ENCODE measurements at regions of chr22 and their contacts with region 1.

Region 1: DNA sequence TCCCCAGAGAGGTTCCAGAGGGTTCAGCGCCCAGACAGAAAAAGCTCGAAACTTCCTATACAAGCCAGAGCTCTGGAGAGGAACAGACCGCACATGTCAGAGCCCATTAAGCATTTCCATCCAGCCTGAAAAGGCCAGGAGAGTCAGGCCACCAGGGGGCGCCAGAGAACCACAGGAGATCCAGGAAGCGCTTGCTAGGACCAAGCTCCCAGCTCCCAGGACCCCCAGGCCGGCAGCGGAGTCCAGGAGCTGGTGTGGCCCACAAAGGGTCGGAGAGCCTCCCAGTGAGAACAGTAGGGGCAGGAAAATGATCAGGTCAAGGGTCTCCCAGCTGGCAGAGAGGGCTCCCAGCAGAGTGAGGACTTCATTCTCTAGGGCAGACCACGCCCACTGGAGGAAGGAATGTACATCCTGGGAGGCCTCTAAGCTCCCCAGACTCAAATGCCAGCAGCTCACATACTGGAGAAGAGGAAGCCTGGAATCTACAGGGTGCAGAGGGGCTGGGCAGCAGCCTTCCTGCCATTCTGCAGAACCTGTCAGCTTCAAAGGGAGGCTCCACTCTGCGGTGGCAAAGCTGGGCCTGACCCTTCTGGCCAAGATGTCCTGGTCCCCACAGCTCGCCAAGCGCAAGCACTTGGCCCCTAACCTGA is 2.1 kb upstream of the MEI1 start:
- DNase-seq: peak; percentile 78 to 98 (median 88)
- ATAC-seq: peak; percentile 81
- H3K4me3 ChIP-seq: no peak overlapping the region
- H3K4me3 Mint-ChIP-seq: peak overlapping the region; percentile 64
- H3K27ac ChIP-seq: no peak overlapping the region
- H3K27ac Mint-ChIP-seq: no peak overlapping the region
- H3K4me1 ChIP-seq: peaks cover 16% of the 10 kb centered on the region
- H3K4me1 Mint-ChIP-seq: peaks cover 10% of the 10 kb centered on the region
- H3K27me3 ChIP-seq: no peaks in the 10 kb centered on the region
- H3K27me3 Mint-ChIP-seq: no peaks in the 10 kb centered on the region
- CTCF ChIP-seq: peak; percentile 89

Region 2: GRCh38 chr22:41382610-41383009 is 314.6 kb before region 1 on chr22:
- CTCF ChIA-PET with region 1: no interaction called
- POLR2A ChIA-PET with region 1: no interaction called
- intact Hi-C with region 1: no loop called
- DNase-seq: no peak
- ATAC-seq: no peak
- H3K4me3 ChIP-seq: peak overlapping the region; percentile 71 to 88
- H3K4me3 Mint-ChIP-seq: peak overlapping the region; percentile 93
- H3K27ac ChIP-seq: peak overlapping the region; percentile 87 to 95
- H3K27ac Mint-ChIP-seq: peak overlapping the region; percentile 92
- H3K4me1 ChIP-seq: peaks cover 15% of the 10 kb centered on the region
- H3K4me1 Mint-ChIP-seq: peaks cover 21% of the 10 kb centered on the region
- H3K27me3 ChIP-seq: no peaks in the 10 kb centered on the region
- H3K27me3 Mint-ChIP-seq: no peaks in the 10 kb centered on the region
- CTCF ChIP-seq: no peak

Region 3: GRCh38 chr22:41682033-41682807 is 15.0 kb before region 1 on chr22:
- CTCF ChIA-PET with region 1: interaction called, 49 read pairs
- POLR2A ChIA-PET with region 1: interaction called, 3 read pairs
- intact Hi-C with region 1: no loop called
- DNase-seq: peak; percentile 75 to 91 (median 84)
- ATAC-seq: peak; percentile 92
- H3K4me3 ChIP-seq: peak overlapping the region; percentile 73
- H3K4me3 Mint-ChIP-seq: peak overlapping the region; percentile 99
- H3K27ac ChIP-seq: peak overlapping the region; percentile 82 to 87
- H3K27ac Mint-ChIP-seq: peak overlapping the region; percentile 98
- H3K4me1 ChIP-seq: peaks cover 16% of the 10 kb centered on the region
- H3K4me1 Mint-ChIP-seq: peaks cover 38% of the 10 kb centered on the region
- H3K27me3 ChIP-seq: no peaks in the 10 kb centered on the region
- H3K27me3 Mint-ChIP-seq: no peaks in the 10 kb centered on the region
- CTCF ChIP-seq: no peak

Region 4: GRCh38 chr22:41762980-41763779 is 65.9 kb after region 1 on chr22:
- CTCF ChIA-PET with region 1: interaction called, 3 read pairs
- POLR2A ChIA-PET with region 1: no interaction called
- intact Hi-C with region 1: loop called in 1 of 2 experiments (anchors 5 kb)
- DNase-seq: peak in 5 of 9 experiments; percentile 25 to 53 (median 45)
- ATAC-seq: no peak
- H3K4me3 ChIP-seq: no peak overlapping the region
- H3K4me3 Mint-ChIP-seq: no peak overlapping the region
- H3K27ac ChIP-seq: no peak overlapping the region
- H3K27ac Mint-ChIP-seq: no peak overlapping the region
- H3K4me1 ChIP-seq: no peaks in the 10 kb centered on the region
- H3K4me1 Mint-ChIP-seq: no peaks in the 10 kb centered on the region
- H3K27me3 ChIP-seq: no peaks in the 10 kb centered on the region
- H3K27me3 Mint-ChIP-seq: no peaks in the 10 kb centered on the region
- CTCF ChIP-seq: peak; percentile 33

Region 5: DNA sequence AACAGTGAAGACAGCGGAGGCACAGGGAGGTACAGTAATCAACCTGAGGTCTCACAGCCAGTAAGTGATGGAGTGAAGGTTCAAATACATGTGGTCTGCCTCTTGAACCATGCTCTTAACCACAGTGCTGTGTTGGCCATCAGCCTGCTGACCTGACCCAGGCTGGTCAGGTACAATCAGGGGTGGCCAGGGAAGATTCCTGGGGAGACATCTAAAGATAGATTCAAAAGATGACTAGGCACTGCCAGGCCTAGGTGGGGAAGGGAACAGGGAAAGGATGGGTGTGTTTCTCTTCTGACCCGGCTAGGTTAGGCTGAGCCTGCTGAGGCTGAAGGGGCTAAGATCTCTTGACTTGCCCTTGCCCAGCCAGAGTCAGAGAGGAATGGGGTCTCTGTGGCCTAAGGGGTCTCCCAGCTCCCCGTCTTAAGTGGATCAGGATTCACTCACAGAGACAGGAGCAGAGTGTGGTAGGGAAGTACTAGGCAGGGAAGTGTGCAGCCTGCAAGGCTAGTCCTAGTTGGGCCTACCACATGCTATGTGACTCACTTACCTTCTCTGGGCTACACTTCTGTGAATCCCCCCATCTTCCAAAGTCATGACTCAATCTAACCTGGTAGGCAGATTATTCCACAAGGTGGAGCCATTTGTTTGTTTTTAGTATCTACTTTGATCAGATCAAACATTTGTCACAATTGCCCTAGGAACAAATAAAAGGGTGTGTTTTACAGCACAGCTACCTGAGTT is 125.2 kb after region 1 on chr22:
- CTCF ChIA-PET with region 1: interaction called, 11 read pairs
- POLR2A ChIA-PET with region 1: no interaction called
- intact Hi-C with region 1: no loop called
- DNase-seq: peak in 5 of 9 experiments; percentile 21 to 88 (median 48)
- ATAC-seq: peak; percentile 95
- H3K4me3 ChIP-seq: no peak overlapping the region
- H3K4me3 Mint-ChIP-seq: no peak overlapping the region
- H3K27ac ChIP-seq: no peak overlapping the region
- H3K27ac Mint-ChIP-seq: peak overlapping the region; percentile 72
- H3K4me1 ChIP-seq: no peaks in the 10 kb centered on the region
- H3K4me1 Mint-ChIP-seq: peaks cover 8% of the 10 kb centered on the region
- H3K27me3 ChIP-seq: no peaks in the 10 kb centered on the region
- H3K27me3 Mint-ChIP-seq: no peaks in the 10 kb centered on the region
- CTCF ChIP-seq: peak; percentile 57

Region 6: DNA sequence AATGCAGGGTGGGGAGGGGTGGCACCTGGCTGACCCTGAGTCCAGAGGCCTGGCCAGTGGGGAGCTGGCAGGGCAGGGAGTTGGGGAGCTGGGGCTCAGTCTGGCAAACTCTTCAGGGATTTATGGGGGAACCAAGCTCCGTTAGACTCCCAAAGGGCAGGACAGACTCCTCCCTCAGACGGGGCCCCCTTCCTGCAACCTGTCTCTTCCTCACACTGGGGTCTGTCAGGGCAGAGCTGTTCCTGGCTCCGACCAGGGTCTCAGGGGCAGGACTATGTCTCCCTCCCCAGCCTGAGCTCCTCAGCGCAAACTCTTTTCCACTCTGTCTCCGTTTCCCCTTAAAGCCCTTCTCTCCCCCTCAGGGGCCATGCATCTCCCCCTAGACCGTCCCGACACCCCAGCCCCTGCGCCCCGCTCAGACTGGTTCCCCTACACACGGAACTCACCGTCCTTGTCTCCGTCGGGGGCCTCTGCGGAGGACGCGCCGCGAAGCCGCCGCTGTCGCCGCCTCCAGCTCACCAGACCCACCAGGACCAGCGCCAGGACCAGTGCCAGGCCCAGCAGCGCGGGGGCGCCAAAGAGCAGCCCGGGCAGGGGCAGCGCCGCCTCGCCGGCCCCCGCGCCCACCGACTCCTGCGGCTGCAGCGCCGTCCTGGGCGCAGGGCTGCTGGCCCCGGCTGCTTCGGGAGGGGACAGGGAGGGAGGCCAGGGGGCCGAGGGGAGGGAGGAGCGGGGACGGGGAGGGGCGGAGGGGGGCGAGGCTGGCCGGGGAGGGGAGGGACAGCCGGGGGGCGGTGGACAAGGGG is 228.6 kb after region 1 on chr22:
- CTCF ChIA-PET with region 1: interaction called, 10 read pairs
- POLR2A ChIA-PET with region 1: interaction called, 3 read pairs
- intact Hi-C with region 1: no loop called
- DNase-seq: peak; percentile 61 to 86 (median 80)
- ATAC-seq: peak; percentile 75
- H3K4me3 ChIP-seq: peak overlapping the region; percentile 43 to 57
- H3K4me3 Mint-ChIP-seq: peak overlapping the region; percentile 85
- H3K27ac ChIP-seq: no peak overlapping the region
- H3K27ac Mint-ChIP-seq: peak overlapping the region; percentile 69
- H3K4me1 ChIP-seq: peaks cover 18% of the 10 kb centered on the region
- H3K4me1 Mint-ChIP-seq: peaks cover 25% of the 10 kb centered on the region
- H3K27me3 ChIP-seq: peaks cover 0 to 3% of the 10 kb centered on the region in 2 experiments
- H3K27me3 Mint-ChIP-seq: no peaks in the 10 kb centered on the region
- CTCF ChIP-seq: peak; percentile 88

Region 7: DNA sequence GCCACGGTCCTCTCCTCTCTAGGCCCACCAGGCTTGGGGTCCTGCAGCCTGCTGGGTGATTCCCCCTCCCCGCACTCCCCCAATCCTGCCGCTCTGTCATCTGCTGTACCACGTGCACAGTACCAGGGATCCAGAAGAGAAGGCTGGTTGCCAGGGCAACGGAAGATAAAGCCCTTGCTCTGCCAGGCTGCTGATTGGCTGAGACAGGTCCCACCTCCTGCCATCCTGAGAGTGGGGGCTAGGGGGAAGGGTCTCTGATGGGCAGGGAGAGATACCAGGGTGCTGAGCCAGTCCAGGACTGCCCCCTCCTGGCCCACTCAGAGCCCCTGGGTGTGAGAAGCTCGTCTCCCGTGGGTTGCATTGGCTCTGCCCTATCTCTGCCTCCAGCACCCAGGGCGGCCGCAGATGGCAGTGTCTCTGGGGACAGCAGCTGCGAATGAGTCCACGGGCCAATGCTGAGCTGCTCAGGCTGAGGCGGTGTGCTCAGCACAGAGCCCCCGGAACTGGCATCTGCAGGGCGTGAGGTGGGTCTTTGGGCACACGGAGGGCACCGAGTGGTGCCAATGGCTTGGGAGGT is 254.7 kb after region 1 on chr22 and contains the start of gene SMIM45:
- CTCF ChIA-PET with region 1: interaction called, 23 read pairs
- POLR2A ChIA-PET with region 1: no interaction called
- intact Hi-C with region 1: loop called (anchors 1 kb)
- DNase-seq: no peak
- ATAC-seq: no peak
- H3K4me3 ChIP-seq: no peak within 1 kb of the TSS
- H3K4me3 Mint-ChIP-seq: no peak within 1 kb of the TSS
- H3K27ac ChIP-seq: no peak within 1 kb of the TSS
- H3K27ac Mint-ChIP-seq: no peak within 1 kb of the TSS
- H3K4me1 ChIP-seq: peaks cover 9% of the 10 kb centered on the region
- H3K4me1 Mint-ChIP-seq: peaks cover 6% of the 10 kb centered on the region
- H3K27me3 ChIP-seq: peaks cover 0 to 3% of the 10 kb centered on the region in 2 experiments
- H3K27me3 Mint-ChIP-seq: no peaks in the 10 kb centered on the region
- CTCF ChIP-seq: no peak

Region 8: GRCh38 chr22:42331014-42331413 is 633.8 kb after region 1 on chr22:
- CTCF ChIA-PET with region 1: no interaction called
- POLR2A ChIA-PET with region 1: no interaction called
- intact Hi-C with region 1: no loop called
- DNase-seq: peak in 1 of 9 experiments; percentile 14
- ATAC-seq: no peak
- H3K4me3 ChIP-seq: no peak overlapping the region
- H3K4me3 Mint-ChIP-seq: no peak overlapping the region
- H3K27ac ChIP-seq: no peak overlapping the region
- H3K27ac Mint-ChIP-seq: no peak overlapping the region
- H3K4me1 ChIP-seq: peaks cover 28% of the 10 kb centered on the region
- H3K4me1 Mint-ChIP-seq: peaks cover 43% of the 10 kb centered on the region
- H3K27me3 ChIP-seq: no peaks in the 10 kb centered on the region
- H3K27me3 Mint-ChIP-seq: no peaks in the 10 kb centered on the region
- CTCF ChIP-seq: no peak